OCI-LY7 (cell line): ENCODE measurements at regions of chr14 and their contacts with region 1.

Region 1: GRCh38 chr14:96100161-96101029 is 61.2 kb downstream of the C14orf132 start:
- DNase-seq: peak; percentile 62
- H3K4me3 ChIP-seq: no peak overlapping the region
- H3K27ac ChIP-seq: no peak overlapping the region
- H3K4me1 ChIP-seq: no peaks in the 10 kb centered on the region
- CTCF ChIP-seq: peak; percentile 96

Region 2: DNA sequence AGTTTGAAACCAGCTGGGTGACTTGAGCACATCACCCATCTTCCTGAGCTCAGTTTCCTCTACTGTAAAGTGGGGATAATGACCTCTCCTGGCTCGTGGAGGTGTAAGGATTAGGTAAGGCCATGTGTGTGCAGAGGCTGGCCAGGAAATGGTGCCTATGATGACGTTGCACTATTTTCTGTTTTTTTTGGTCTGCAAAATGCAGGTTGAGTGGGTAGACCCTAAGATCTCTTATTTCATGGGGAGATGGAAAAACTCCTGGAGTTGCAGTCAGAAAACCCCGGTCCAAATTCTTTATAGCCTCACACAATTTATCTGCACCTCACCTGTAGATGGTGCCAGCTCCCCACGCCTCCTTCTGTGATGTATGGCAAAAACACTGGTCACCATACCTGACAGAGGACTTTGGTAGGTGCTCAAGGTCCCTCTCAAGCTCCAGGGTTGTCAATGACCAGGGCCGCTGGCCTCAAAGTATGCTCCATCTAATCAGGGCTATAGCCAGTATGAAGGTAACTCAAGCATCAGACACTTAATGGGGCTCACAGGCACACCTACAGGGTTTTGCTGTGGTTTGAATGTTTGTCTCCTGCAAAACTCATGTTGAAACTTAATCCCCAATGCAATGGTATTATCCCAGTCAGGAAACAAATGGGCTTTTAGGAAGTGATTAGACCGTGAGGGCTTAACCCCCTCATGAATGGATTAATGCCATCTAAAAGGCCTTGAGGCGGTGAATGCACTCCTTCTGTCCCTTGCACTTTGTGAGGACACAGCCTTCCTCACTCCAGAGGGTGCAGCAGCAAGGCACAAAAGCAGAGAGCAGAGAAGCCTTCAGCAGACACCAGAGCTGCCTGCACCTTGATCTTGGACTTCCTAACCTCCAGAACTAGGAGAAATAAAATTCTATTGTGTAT is 43.6 kb before region 1 on chr14:
- CTCF ChIA-PET with region 1: interaction called, 3 read pairs
- POLR2A ChIA-PET with region 1: no interaction called
- intact Hi-C with region 1: loop called (anchors 1 kb)
- DNase-seq: peak; percentile 9
- H3K4me3 ChIP-seq: no peak overlapping the region
- H3K27ac ChIP-seq: no peak overlapping the region
- H3K4me1 ChIP-seq: no peaks in the 10 kb centered on the region
- CTCF ChIP-seq: peak; percentile 52

Region 3: GRCh38 chr14:96176811-96177603 is 76.6 kb after region 1 on chr14:
- CTCF ChIA-PET with region 1: no interaction called
- POLR2A ChIA-PET with region 1: no interaction called
- intact Hi-C with region 1: no loop called
- DNase-seq: no peak
- H3K4me3 ChIP-seq: no peak overlapping the region
- H3K27ac ChIP-seq: no peak overlapping the region
- H3K4me1 ChIP-seq: no peaks in the 10 kb centered on the region
- CTCF ChIP-seq: no peak

Region 4: DNA sequence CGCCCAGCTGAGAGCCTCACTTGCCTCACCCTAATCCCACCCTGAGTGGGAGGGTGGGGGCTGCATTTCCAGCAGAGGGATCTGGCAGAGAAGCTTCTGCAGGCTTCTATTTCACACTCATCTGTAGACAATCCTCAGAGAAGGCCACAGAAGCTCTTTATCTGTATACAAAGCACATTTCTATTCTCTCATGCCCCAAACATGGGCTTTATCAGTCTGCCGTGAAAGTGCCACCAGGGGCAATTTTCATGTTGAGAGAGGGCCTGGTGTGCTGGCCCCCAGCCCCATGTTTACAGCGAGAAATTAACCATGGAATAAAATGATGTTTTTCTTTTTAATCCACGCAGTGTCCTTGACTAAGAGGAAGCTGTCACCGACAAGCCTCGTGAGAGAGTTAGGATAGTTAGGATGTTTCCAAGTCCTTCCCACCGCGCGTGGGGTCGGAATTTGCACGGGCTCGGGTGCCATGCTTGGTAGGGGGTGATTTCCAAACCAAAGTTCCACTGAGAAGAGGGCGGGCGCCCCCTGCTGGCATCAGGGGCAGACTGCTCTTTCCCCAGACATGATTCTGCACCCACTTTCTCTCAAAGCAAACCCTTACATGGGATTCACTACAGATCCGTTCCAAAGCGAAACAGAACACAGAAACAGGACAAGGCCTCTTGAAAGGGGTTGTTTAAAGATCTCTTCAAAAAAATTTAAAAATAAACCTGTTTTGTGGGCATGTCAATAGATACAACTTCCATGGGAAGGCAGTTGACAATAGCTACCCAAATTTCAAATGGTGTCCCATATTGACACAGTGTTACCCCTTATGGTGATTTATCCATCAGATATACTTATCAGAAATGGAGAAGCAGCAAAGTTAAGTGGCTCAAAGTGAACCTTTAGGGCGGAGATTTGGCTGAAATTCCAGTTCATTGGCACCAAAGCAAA is 175.1 kb after region 1 on chr14:
- CTCF ChIA-PET with region 1: interaction called, 3 read pairs
- POLR2A ChIA-PET with region 1: no interaction called
- intact Hi-C with region 1: loop called (anchors 1 kb)
- DNase-seq: peak; percentile 61
- H3K4me3 ChIP-seq: no peak overlapping the region
- H3K27ac ChIP-seq: no peak overlapping the region
- H3K4me1 ChIP-seq: no peaks in the 10 kb centered on the region
- CTCF ChIP-seq: peak; percentile 95

Region 5: GRCh38 chr14:96424109-96424989 is 324.0 kb after region 1 on chr14:
- CTCF ChIA-PET with region 1: no interaction called
- POLR2A ChIA-PET with region 1: no interaction called
- intact Hi-C with region 1: loop called (anchors 1 kb)
- DNase-seq: peak; percentile 78
- H3K4me3 ChIP-seq: peak overlapping the region; percentile 35
- H3K27ac ChIP-seq: no peak overlapping the region
- H3K4me1 ChIP-seq: peaks cover 5% of the 10 kb centered on the region
- CTCF ChIP-seq: peak; percentile 97